ENCODE measurements at regions of chr6 and their contacts with region 1.

Region 1: GRCh38 chr6:52162940-52163908 is 23.0 kb upstream of the IL17A start:
- DNase-seq: no peak
- H3K4me3 ChIP-seq: no peak overlapping the region
- H3K27ac ChIP-seq: no peak overlapping the region
- H3K27me3 ChIP-seq: peaks cover 0 to 21% (median 0%) of the 10 kb centered on the region in 45 donors
- CTCF ChIP-seq: peak in 55 of 56 donors; percentile 15 to 74 (median 52)

Region 2: DNA sequence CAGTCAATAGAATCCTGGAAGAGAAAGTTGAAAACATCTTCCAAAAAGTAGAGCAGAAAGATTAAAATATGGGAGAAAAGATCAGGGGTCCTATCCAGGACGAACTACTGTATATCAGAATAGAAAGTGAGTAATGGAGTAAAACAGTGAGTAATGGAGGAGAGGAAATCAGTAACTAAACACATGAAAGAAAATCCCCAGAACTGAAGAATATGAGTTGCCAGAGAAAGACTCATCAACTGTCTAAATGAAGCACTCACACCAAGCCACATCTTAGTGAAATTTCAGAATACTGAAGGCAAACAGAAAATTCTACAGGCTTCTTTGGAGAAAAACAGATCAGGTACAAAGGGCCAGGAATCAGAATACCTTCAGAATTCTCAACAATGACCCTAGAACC is 37.8 kb after region 1 on chr6:
- intact Hi-C with region 1: loop called in 1 of 2 experiments (anchors 1 kb)
- DNase-seq: no peak
- H3K4me3 ChIP-seq: no peak overlapping the region
- H3K27ac ChIP-seq: no peak overlapping the region
- H3K27me3 ChIP-seq: no peaks in the 10 kb centered on the region
- CTCF ChIP-seq: no peak

Region 3: GRCh38 chr6:52512199-52512598 is 349.0 kb after region 1 on chr6:
- intact Hi-C with region 1: no loop called
- DNase-seq: no peak
- H3K4me3 ChIP-seq: no peak overlapping the region
- H3K27ac ChIP-seq: peak overlapping the region in 54 of 59 donors; percentile 4 to 85 (median 64)
- H3K27me3 ChIP-seq: no peaks in the 10 kb centered on the region
- CTCF ChIP-seq: no peak

Measured in dorsolateral prefrontal cortex (tissue), 120 donors.